ENCODE measurements at regions of chr12 and their contacts with region 1.

Region 1: DNA sequence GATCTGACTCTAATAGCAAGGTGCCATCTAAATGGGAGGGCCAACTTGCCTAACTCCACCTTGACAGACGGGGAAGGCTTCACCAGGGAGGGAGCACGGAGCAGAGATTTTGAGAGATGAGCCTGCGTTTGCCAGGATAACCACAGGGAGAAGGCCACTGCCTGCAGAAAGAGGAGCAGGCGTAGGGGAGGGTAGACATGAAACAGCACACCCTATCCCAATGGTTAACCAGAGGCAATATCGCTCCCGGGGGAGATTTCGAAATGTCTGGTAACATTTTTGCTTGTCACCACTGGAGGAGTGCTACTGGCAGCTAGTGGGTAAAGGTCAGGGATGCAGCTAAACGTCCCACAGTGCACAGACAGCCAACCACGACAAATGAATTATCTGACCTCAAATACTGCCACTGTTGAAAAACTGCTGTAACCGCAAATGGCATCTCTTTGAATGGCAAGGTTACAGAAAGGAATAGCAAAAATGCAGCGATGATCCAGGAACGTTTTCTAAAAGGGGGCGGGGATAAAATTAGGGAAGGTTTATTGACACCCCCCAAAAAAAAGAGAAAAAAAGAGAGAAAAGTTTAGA is 126.0 kb upstream of the ATF7IP start:
- DNase-seq: no peak
- H3K4me3 ChIP-seq: no peak overlapping the region
- H3K27ac ChIP-seq: no peak overlapping the region
- H3K4me1 ChIP-seq: no peaks in the 10 kb centered on the region
- H3K27me3 ChIP-seq: no peaks in the 10 kb centered on the region
- CTCF ChIP-seq: no peak
- POLR2A ChIP-seq: no peak

Region 2: DNA sequence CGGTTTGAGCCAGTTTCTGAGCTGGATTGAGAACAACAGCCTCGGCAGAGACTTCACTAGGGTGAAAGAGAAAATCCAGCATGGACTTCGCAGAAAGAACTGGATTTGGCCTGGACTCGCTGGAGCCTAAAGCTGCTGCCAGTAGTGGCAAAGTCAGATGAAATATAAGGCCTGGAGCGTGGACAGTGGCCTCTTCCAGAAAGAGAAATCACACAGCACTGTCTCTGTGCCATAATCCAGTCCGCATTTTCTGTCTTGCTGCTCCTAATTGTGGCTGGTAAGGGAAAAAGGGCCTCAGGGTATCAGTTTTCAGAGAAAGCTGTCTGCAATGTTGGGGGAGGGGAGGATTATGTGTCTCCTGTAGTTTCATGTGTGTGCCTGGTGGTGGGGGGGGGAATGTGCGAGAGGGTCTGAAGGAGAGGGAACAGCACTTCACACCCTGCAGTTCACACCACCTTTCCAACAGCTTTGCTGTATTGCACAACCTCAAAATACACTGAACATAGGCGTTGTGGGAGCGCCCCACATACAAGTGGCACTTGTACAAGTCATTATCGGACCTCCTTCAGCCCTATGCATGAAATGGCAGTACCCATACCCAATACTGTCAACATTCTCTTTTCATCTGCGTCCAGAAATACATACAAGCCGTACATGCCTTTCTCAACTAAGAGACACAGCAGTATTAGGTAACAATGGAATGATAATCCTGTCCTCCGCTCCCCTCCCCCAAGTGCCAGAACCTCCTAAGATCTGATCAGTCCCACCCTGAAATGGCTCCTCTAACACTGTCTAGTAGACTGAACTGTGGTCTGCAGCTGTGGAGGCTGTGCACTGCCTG is 18.5 kb after region 1 on chr12:
- CTCF ChIA-PET with region 1: interaction called, 32 read pairs
- POLR2A ChIA-PET with region 1: no interaction called
- dilution Hi-C with region 1: no loop called
- intact Hi-C with region 1: loop called (anchors 1 kb)
- DNase-seq: peak; percentile 99
- H3K4me3 ChIP-seq: no peak overlapping the region
- H3K27ac ChIP-seq: peak overlapping the region; percentile 87
- H3K4me1 ChIP-seq: peaks cover 46% of the 10 kb centered on the region
- H3K27me3 ChIP-seq: no peaks in the 10 kb centered on the region
- CTCF ChIP-seq: no peak
- POLR2A ChIP-seq: no peak

Region 3: GRCh38 chr12:14417715-14418114 is 178.3 kb after region 1 on chr12:
- CTCF ChIA-PET with region 1: interaction called, 142 read pairs
- POLR2A ChIA-PET with region 1: interaction called, 4 read pairs
- dilution Hi-C with region 1: no loop called
- intact Hi-C with region 1: loop called (anchors 1 kb)
- DNase-seq: peak; percentile 96
- H3K4me3 ChIP-seq: no peak overlapping the region
- H3K27ac ChIP-seq: peak overlapping the region; percentile 54
- H3K4me1 ChIP-seq: peaks cover 45% of the 10 kb centered on the region
- H3K27me3 ChIP-seq: no peaks in the 10 kb centered on the region
- CTCF ChIP-seq: no peak
- POLR2A ChIP-seq: no peak

Region 4: GRCh38 chr12:14454098-14454907 is 214.9 kb after region 1 on chr12:
- CTCF ChIA-PET with region 1: interaction called, 87 read pairs
- POLR2A ChIA-PET with region 1: no interaction called
- dilution Hi-C with region 1: no loop called
- intact Hi-C with region 1: loop called (anchors 1 kb)
- DNase-seq: peak; percentile 33
- H3K4me3 ChIP-seq: no peak overlapping the region
- H3K27ac ChIP-seq: no peak overlapping the region
- H3K4me1 ChIP-seq: no peaks in the 10 kb centered on the region
- H3K27me3 ChIP-seq: no peaks in the 10 kb centered on the region
- CTCF ChIP-seq: peak; percentile 59 to 63
- POLR2A ChIP-seq: no peak

Region 5: DNA sequence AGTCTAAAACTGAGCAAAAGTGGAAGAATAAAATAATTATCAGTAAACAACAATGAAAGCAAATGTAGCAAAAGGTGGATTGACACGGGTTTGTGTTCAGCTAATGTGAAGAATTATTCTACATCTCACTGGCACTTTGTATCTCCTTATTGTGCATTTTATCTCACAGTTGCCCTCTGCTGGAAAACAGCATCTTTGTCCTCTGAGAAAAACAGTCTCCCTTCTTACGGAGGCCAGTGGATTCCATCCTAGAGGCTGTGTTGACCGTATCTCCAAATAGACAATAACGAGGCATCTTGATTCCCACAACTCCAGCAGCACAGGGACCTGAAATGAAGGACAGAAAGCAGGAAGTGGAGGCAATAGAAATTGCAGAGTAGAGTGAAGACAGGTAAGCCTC is 379.5 kb after region 1 on chr12:
- CTCF ChIA-PET with region 1: interaction called, 83 read pairs
- POLR2A ChIA-PET with region 1: no interaction called
- dilution Hi-C with region 1: no loop called
- intact Hi-C with region 1: loop called (anchors 1 kb)
- DNase-seq: peak; percentile 19
- H3K4me3 ChIP-seq: no peak overlapping the region
- H3K27ac ChIP-seq: no peak overlapping the region
- H3K4me1 ChIP-seq: no peaks in the 10 kb centered on the region
- H3K27me3 ChIP-seq: peaks cover 0 to 1% of the 10 kb centered on the region in 2 experiments
- CTCF ChIP-seq: peak in 1 of 2 donors; percentile 17
- POLR2A ChIP-seq: no peak

Region 6: GRCh38 chr12:14716848-14717444 is 477.5 kb after region 1 on chr12:
- CTCF ChIA-PET with region 1: interaction called, 88 read pairs
- POLR2A ChIA-PET with region 1: no interaction called
- dilution Hi-C with region 1: no loop called
- intact Hi-C with region 1: no loop called
- DNase-seq: peak; percentile 52
- H3K4me3 ChIP-seq: no peak overlapping the region
- H3K27ac ChIP-seq: no peak overlapping the region
- H3K4me1 ChIP-seq: no peaks in the 10 kb centered on the region
- H3K27me3 ChIP-seq: peaks cover 0 to 5% of the 10 kb centered on the region in 2 experiments
- CTCF ChIP-seq: peak; percentile 41 to 54
- POLR2A ChIP-seq: no peak

Measured in endothelial cell of umbilical vein (primary cell).